Activated T-helper 1 cell treated with anti-CD3 and anti-CD28 coated beads, Interleukin-12 subunit alpha, Interleukin-12 subunit beta, Interleukin-2, Interleukin-4 antibody, amounts not matched to agents 30 ng/mL and 10 ng/mL and 1 ng/mL, durations not matched to agents 14 hours and 24 hours and 36 hours (primary cell): ENCODE measurements at regions of chr16 and their contacts with region 1.

Region 1: GRCh38 chr16:73196670-73197069 is 148.7 kb upstream of the ZFHX3 start:
- DNase-seq: no peak
- H3K4me3 Mint-ChIP-seq: no peak overlapping the region
- H3K27ac Mint-ChIP-seq: no peak overlapping the region
- H3K4me1 Mint-ChIP-seq: no peaks in the 10 kb centered on the region
- H3K27me3 Mint-ChIP-seq: peaks cover 3% of the 10 kb centered on the region

Region 2: GRCh38 chr16:72124761-72125634 is 1071.7 kb before region 1 on chr16:
- intact Hi-C with region 1: loop called (anchors 5 kb)
- DNase-seq: peak; percentile 39
- H3K4me3 Mint-ChIP-seq: no peak overlapping the region
- H3K27ac Mint-ChIP-seq: no peak overlapping the region
- H3K4me1 Mint-ChIP-seq: no peaks in the 10 kb centered on the region
- H3K27me3 Mint-ChIP-seq: peaks cover 9% of the 10 kb centered on the region

Region 3: DNA sequence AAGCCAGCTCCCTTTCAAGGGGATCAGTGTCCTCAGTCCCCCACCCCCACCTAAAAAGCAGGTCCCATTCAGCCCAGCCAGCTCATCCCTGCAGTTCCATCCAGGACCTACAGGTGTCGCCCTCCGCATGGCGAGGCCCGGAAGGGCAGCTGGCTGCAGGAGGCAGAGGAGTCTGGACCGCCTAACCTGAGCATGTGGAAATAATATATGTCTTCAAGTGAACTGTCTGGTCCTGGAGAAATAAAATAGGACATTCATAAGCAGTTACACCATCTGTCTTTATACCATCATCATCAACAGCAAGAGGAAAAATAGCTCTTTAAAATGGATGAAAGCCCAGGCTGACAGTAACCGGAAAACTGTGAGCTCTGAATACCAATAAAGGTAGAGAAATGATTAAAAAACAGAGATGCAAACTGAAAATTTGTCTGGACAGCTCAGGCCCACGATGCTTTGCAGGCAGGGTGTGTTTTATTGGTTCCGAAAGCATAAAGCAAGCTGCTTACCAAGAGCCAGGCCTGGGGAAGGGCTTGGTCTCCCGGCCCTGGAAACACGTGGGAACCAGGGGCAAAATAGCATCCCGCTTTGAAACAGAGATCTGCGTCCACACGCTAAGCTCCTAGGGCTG is 363.9 kb before region 1 on chr16:
- intact Hi-C with region 1: loop called (anchors 1 kb)
- DNase-seq: peak; percentile 41
- H3K4me3 Mint-ChIP-seq: no peak overlapping the region
- H3K27ac Mint-ChIP-seq: no peak overlapping the region
- H3K4me1 Mint-ChIP-seq: peaks cover 4% of the 10 kb centered on the region
- H3K27me3 Mint-ChIP-seq: peaks cover 3% of the 10 kb centered on the region

Region 4: GRCh38 chr16:72978212-72978611 is 218.5 kb before region 1 on chr16:
- intact Hi-C with region 1: no loop called
- DNase-seq: no peak
- H3K4me3 Mint-ChIP-seq: no peak overlapping the region
- H3K27ac Mint-ChIP-seq: no peak overlapping the region
- H3K4me1 Mint-ChIP-seq: no peaks in the 10 kb centered on the region
- H3K27me3 Mint-ChIP-seq: no peaks in the 10 kb centered on the region